ENCODE measurements at regions of chr2 and their contacts with region 1.

Region 1: DNA sequence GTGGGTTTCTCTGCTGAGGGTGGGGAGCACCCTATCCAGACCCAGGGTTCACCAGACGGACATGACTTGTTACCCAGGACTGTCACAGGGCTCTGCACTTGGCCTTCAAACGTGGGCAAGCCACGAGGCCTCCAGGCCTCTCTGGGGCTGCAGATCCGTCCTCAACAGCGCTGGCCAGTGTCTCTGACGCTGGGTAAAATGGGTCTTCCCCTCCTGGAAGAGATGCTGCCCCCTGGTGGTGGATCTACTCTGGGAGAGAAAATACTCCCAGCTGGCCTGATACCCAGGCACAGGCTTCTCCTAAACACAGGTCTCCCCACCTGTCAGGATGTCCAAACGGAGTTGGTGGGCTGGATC is 3.7 kb downstream of the GPR17 start:
- DNase-seq: no peak
- H3K4me3 ChIP-seq: no peak overlapping the region
- H3K27ac ChIP-seq: peak overlapping the region; percentile 88 to 93 (median 92)
- H3K4me1 ChIP-seq: peaks cover 94 to 100% (median 98%) of the 10 kb centered on the region in 4 donors
- H3K27me3 ChIP-seq: no peaks in the 10 kb centered on the region
- CTCF ChIP-seq: peak; percentile 74 to 88 (median 83)
- EP300 ChIP-seq: no peak
- POLR2A ChIP-seq: no peak

Region 2: DNA sequence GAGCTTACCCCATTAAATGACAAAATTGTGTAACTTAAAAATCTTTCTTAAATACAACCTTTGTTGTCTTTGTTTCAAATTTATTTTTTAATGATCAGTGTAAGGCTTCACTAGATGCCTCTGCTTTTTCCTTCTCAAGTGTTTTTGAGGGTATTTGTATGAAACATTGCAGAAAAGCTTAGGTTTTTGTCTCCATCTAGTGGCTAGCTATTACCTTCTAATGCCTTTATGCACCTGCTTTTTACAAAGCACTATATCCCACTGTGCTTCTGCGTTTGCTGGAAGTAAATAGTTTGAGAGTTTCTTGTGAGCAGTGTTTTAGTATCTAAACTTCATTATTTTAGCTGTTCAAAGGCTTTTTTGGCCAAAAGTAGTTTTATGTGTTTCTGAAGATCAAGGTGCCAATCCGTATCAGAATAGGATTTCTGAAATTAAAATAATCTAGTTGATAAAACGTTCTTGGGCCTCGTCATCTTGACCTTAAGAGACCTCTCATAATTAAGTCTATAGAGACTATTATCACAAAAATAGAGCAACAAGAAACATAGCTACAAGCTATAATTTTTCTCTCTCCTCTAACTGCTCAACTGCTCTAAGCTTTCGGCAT is 170.3 kb before region 1 on chr2:
- intact Hi-C with region 1: no loop called
- DNase-seq: no peak
- H3K4me3 ChIP-seq: no peak overlapping the region
- H3K27ac ChIP-seq: no peak overlapping the region
- H3K4me1 ChIP-seq: no peaks in the 10 kb centered on the region
- H3K27me3 ChIP-seq: no peaks in the 10 kb centered on the region
- CTCF ChIP-seq: peak; percentile 54 to 68 (median 60)
- EP300 ChIP-seq: no peak
- POLR2A ChIP-seq: no peak

Region 3: DNA sequence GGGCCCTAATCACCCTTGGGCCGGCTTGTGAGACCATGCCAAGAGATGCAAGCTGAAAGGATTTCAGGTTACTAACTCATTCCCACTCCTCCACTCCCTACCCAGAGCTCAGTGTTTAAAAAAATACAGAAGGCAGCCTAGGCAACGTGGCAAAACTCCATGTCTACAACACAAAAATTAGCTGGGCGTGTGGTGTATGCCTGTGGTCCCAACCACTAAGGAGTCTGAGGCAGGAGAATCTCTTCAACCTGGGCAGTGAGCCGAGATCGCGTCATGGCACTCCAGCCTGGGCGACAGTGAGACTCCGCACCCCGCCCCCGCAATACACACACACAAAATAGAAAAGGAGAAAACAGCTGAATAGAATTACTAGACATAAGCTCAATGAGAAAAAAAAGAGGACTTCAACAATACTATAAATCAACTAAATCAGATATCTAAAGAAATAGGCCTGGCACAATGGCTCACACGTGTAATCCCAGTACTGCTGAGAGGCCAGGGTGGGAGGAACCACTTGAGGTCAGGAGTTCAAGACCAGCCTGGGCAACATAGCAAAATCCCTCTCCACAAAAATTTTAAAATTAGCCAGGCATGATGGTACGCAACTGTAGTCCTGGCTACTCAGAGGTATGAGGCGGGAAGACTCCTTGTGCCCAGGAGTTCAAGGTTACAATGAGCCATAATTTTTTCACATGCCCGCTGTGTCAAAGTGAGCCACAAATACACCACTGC is 133.5 kb before region 1 on chr2:
- intact Hi-C with region 1: loop called (anchors 10 kb)
- DNase-seq: no peak
- H3K4me3 ChIP-seq: peak overlapping the region in 1 of 4 donors; percentile 3
- H3K27ac ChIP-seq: peak overlapping the region; percentile 79 to 84 (median 80)
- H3K4me1 ChIP-seq: peaks cover 41 to 61% (median 54%) of the 10 kb centered on the region in 4 donors
- H3K27me3 ChIP-seq: no peaks in the 10 kb centered on the region
- CTCF ChIP-seq: no peak
- EP300 ChIP-seq: no peak
- POLR2A ChIP-seq: no peak

Region 4: DNA sequence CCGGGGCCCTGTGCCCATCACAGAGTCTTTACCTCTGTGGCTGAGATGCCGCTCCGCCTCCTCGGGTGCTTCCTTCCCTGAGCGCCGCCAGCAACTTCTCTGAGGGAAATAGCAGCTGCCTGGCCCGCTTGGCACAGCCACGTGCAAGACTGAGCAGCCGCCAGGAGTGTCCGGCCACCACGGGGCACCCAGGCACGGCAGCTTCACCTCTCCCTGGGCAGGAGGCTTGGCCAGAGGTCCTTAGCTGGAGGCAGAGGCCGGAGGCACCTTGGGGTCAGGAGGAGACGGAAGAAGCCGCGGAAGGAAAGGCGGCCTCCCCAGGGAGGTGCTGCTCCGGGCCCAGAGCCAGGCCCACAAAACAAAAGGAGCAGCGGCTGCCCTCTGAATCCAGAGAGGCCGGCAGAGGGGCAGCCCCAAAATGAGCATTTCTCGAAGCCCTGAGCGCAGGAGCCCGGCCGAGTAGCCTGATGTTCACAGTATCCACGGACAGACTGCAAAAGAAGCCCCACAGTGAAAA is 31.7 kb after region 1 on chr2:
- intact Hi-C with region 1: loop called (anchors 5 kb)
- DNase-seq: peak; percentile 91
- H3K4me3 ChIP-seq: peak overlapping the region; percentile 41 to 54 (median 45)
- H3K27ac ChIP-seq: peak overlapping the region; percentile 74 to 81 (median 75)
- H3K4me1 ChIP-seq: peaks cover 25 to 77% (median 68%) of the 10 kb centered on the region in 4 donors
- H3K27me3 ChIP-seq: no peaks in the 10 kb centered on the region
- CTCF ChIP-seq: no peak
- EP300 ChIP-seq: no peak
- POLR2A ChIP-seq: no peak

Region 5: GRCh38 chr2:127695491-127696472 is 46.1 kb after region 1 on chr2:
- intact Hi-C with region 1: loop called (anchors 5 kb)
- DNase-seq: no peak
- H3K4me3 ChIP-seq: peak overlapping the region; percentile 44 to 60 (median 54)
- H3K27ac ChIP-seq: peak overlapping the region; percentile 20 to 65 (median 58)
- H3K4me1 ChIP-seq: peaks cover 11 to 19% (median 16%) of the 10 kb centered on the region in 4 donors
- H3K27me3 ChIP-seq: no peaks in the 10 kb centered on the region
- CTCF ChIP-seq: peak; percentile 77 to 81 (median 77)
- EP300 ChIP-seq: no peak
- POLR2A ChIP-seq: no peak